HepG2 (cell line): ENCODE measurements at regions of chr9 and their contacts with region 1.

Region 1: DNA sequence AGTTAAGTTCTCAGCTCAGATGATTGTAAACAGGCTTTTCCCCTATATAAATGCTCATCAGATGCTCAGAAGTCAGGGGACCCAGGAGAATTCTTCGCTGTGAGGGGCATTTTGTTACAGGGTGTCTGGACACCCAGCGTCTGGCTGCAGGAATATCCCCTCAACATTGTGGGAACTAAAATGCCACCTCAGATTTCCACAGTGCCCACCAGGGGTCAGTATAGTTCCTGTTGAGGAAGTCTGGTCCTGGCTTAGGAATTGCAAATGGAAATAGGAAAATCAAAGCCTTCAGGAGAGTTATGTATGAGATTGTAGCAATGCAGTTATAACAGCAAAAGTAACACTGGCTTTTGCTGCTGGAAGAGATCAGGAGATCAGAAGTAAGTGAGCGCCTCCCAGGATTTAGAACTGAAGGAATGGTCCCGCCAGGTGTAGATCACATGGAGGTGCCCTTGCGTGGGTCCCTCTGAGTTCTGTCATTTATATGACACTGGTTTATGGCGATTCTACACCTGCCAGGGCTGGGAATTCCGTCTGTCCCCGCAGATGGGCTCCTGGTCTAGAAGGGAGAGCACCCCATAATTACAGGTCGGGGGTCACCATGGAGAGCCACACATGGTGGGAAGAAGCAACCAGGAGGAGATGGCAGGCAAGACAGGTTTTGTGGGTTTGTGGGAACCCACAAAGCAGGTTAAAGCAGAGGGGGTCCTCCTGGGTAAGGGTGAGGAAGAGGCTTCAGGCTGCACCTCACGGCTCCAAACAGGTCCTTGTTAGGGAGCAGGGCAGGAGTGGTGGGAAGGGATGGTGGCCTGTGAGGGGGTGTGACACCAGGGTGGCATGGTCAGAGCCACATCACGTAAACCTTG is 47.0 kb upstream of the CTSL start:
- DNase-seq: peak; percentile 64
- ATAC-seq: peak; percentile 80
- H3K4me3 ChIP-seq: no peak overlapping the region
- H3K27ac ChIP-seq: no peak overlapping the region
- H3K4me1 ChIP-seq: no peaks in the 10 kb centered on the region
- H3K27me3 ChIP-seq: no peaks in the 10 kb centered on the region
- CTCF ChIP-seq: peak; percentile 78
- EP300 ChIP-seq: no peak
- POLR2A ChIP-seq: no peak
- RAD21 ChIP-seq: 0 out of 2 replicates have a peak, but pooled peaks have one; percentile 36

Region 2: GRCh38 chr9:87812375-87813118 is 133.7 kb after region 1 on chr9:
- CTCF ChIA-PET with region 1: interaction called, 25 read pairs
- POLR2A ChIA-PET with region 1: no interaction called
- in situ Hi-C with region 1: loop called (anchors 5 kb)
- intact Hi-C with region 1: loop called (anchors 1 kb)
- DNase-seq: peak; percentile 4
- ATAC-seq: peak; percentile 76
- H3K4me3 ChIP-seq: no peak overlapping the region
- H3K27ac ChIP-seq: no peak overlapping the region
- H3K4me1 ChIP-seq: no peaks in the 10 kb centered on the region
- H3K27me3 ChIP-seq: no peaks in the 10 kb centered on the region; a peak in 1 of 5 replicates
- CTCF ChIP-seq: peak; percentile 80
- EP300 ChIP-seq: no peak
- POLR2A ChIP-seq: no peak
- RAD21 ChIP-seq: peak; percentile 56; the same call in 1 of the 2 replicates